ENCODE measurements at regions of chr5 and their contacts with region 1.

Region 1: DNA sequence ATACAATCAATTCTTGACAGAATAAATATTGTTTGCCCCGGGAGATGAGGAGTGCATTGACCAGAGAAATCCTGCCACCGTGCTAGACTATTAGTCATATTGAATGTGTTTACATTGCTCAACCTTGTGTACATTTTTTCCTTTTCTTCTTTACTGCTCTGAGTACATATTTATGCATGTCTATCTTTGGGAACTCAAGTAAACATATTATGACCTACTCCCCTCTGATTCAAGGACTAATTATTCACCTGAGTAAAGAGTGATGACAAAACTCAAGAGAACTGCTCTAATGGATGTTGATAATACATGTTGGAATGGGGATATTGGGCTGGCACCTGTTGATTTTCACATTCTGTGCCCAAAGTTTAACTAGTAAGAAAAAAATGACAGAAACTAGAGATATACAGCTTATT is 3.9 kb upstream of the SPINK1 start:
- DNase-seq: peak in 1 of 2 experiments; percentile 65
- H3K4me3 ChIP-seq: no peak overlapping the region
- H3K4me3 Mint-ChIP-seq: peak overlapping the region; percentile 10
- H3K27ac Mint-ChIP-seq: peak overlapping the region; percentile 48
- H3K4me1 ChIP-seq: peaks cover 81% of the 10 kb centered on the region
- H3K4me1 Mint-ChIP-seq: peaks cover 53% of the 10 kb centered on the region
- H3K27me3 ChIP-seq: no peaks in the 10 kb centered on the region
- H3K27me3 Mint-ChIP-seq: no peaks in the 10 kb centered on the region
- CTCF ChIP-seq: no peak

Region 2: GRCh38 chr5:147437161-147437596 is 398.2 kb before region 1 on chr5:
- CTCF ChIA-PET with region 1: no interaction called
- POLR2A ChIA-PET with region 1: no interaction called
- intact Hi-C with region 1: loop called (anchors 10 kb)
- DNase-seq: no peak
- H3K4me3 ChIP-seq: no peak overlapping the region
- H3K4me3 Mint-ChIP-seq: no peak overlapping the region
- H3K27ac Mint-ChIP-seq: no peak overlapping the region
- H3K4me1 ChIP-seq: peaks cover 35% of the 10 kb centered on the region
- H3K4me1 Mint-ChIP-seq: peaks cover 58% of the 10 kb centered on the region
- H3K27me3 ChIP-seq: no peaks in the 10 kb centered on the region
- H3K27me3 Mint-ChIP-seq: no peaks in the 10 kb centered on the region
- CTCF ChIP-seq: no peak

Region 3: DNA sequence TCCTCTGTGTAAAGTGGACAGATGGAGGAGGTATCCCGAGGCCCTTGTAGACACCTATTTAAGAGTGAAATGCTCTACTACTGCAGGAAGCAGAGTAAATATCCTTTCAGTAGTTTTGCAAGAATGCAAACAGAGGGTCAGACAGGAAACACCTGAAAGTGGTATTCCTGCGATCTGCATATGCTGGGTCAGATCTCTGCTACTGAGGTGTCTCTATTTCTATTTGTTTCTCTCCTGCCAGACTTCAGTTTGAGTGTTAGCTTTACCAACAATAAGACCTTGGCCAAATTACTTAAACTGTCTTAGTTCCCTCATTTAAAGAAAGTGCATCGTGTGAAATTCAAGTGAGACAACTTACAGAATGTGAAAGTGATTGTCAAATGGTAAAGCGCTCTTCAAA is 100.5 kb before region 1 on chr5:
- CTCF ChIA-PET with region 1: no interaction called
- POLR2A ChIA-PET with region 1: no interaction called
- intact Hi-C with region 1: loop called (anchors 5 kb)
- DNase-seq: no peak
- H3K4me3 ChIP-seq: no peak overlapping the region
- H3K4me3 Mint-ChIP-seq: no peak overlapping the region
- H3K27ac Mint-ChIP-seq: no peak overlapping the region
- H3K4me1 ChIP-seq: peaks cover 22% of the 10 kb centered on the region
- H3K4me1 Mint-ChIP-seq: peaks cover 22% of the 10 kb centered on the region
- H3K27me3 ChIP-seq: no peaks in the 10 kb centered on the region
- H3K27me3 Mint-ChIP-seq: no peaks in the 10 kb centered on the region
- CTCF ChIP-seq: no peak

Region 4: DNA sequence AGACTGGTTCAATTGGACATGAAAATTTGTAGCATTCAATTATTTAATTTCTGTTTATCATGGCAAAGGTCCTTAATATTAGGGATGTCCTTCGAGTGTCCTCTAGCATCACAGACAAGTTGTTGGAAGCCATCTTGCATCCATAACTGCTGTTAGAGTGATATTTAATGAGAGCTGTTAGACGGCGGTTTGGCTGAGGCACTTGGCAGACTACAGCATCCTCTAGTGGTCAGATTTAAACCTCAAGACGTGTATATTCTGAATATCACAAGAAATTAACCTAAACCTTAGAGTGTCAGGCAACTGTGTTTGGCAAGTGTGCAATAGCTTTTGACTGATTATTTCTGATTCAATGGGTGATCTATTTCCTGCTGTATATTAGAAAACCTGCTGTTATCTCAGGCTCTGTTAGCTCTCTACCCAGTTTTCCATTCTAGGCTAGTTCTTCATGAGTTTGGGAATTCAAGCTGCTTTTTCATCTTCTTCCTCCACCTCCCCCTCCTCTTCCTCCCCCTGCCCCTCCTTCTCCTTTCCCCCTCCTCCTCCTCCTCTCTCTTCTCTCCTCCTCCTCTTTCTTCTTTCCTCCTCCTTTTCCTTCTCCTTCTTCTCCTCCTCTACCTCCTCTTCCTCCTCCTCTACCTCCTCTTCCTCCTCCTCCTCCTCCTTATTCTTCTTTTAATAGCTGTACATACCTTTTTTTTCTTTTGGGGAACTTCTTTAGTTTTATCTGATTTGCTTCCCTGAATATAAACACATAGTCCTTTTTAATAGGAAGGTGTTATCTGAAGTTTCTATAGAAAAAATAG is 12.5 kb before region 1 on chr5:
- CTCF ChIA-PET with region 1: no interaction called
- POLR2A ChIA-PET with region 1: no interaction called
- intact Hi-C with region 1: loop called (anchors 1 kb)
- DNase-seq: peak in 1 of 2 experiments; percentile 44
- H3K4me3 ChIP-seq: no peak overlapping the region
- H3K4me3 Mint-ChIP-seq: no peak overlapping the region
- H3K27ac Mint-ChIP-seq: no peak overlapping the region
- H3K4me1 ChIP-seq: peaks cover 16% of the 10 kb centered on the region; the same call in 1 of the 2 replicates
- H3K4me1 Mint-ChIP-seq: peaks cover 18% of the 10 kb centered on the region
- H3K27me3 ChIP-seq: no peaks in the 10 kb centered on the region
- H3K27me3 Mint-ChIP-seq: no peaks in the 10 kb centered on the region
- CTCF ChIP-seq: peak; percentile 54 to 61

Region 5: DNA sequence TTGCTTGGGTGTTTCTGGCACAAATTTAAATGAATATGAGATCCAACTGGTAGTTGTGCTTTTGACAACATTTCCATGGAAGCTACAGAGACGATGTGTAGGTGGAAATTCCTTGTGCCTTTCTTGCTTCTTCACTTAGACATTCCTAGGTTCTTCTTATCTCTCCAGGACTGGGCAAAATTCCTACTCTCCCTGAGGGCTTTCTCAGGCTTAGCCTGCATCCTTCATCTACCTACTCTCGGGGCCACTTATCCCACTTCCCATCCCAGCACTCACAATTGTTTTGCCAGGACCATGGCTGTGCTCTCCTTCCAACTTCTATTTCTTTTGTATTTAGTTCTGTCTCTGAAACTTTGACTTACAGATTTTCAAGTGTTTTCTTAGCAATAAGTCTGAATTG is 13.8 kb after region 1 on chr5:
- CTCF ChIA-PET with region 1: no interaction called
- POLR2A ChIA-PET with region 1: no interaction called
- intact Hi-C with region 1: no loop called
- DNase-seq: no peak
- H3K4me3 ChIP-seq: no peak overlapping the region
- H3K4me3 Mint-ChIP-seq: no peak overlapping the region
- H3K27ac Mint-ChIP-seq: no peak overlapping the region
- H3K4me1 ChIP-seq: no peaks in the 10 kb centered on the region
- H3K4me1 Mint-ChIP-seq: peaks cover 7% of the 10 kb centered on the region
- H3K27me3 ChIP-seq: no peaks in the 10 kb centered on the region
- H3K27me3 Mint-ChIP-seq: no peaks in the 10 kb centered on the region
- CTCF ChIP-seq: no peak

Region 6: GRCh38 chr5:147863454-147864206 is 28.2 kb after region 1 on chr5:
- CTCF ChIA-PET with region 1: no interaction called
- POLR2A ChIA-PET with region 1: no interaction called
- intact Hi-C with region 1: no loop called
- DNase-seq: no peak
- H3K4me3 ChIP-seq: no peak overlapping the region
- H3K4me3 Mint-ChIP-seq: no peak overlapping the region
- H3K27ac Mint-ChIP-seq: no peak overlapping the region
- H3K4me1 ChIP-seq: no peaks in the 10 kb centered on the region; the same call in 1 of the 2 replicates
- H3K4me1 Mint-ChIP-seq: peaks cover 7% of the 10 kb centered on the region
- H3K27me3 ChIP-seq: no peaks in the 10 kb centered on the region
- H3K27me3 Mint-ChIP-seq: no peaks in the 10 kb centered on the region
- CTCF ChIP-seq: no peak

Region 7: DNA sequence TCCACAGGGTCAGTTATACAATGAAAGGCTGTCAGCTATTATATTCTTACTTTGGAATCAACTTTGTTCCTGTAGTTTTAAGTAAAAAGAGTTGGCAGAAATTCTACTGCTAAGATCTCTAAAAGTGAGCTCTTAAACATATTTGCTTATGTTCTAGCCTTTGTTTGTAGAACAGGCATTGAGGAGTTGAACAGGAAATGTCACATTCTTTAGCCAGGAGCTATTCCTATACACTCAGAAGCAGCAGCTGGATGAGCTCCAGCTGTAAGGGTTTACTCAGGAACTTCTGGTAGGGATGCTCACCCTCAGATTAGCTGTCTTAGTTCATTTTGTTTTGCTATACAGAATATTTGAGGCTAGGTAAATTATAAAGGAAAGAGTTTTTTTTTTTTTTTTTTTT is 310.5 kb after region 1 on chr5:
- CTCF ChIA-PET with region 1: no interaction called
- POLR2A ChIA-PET with region 1: interaction called, 3 read pairs
- intact Hi-C with region 1: loop called (anchors 2 kb)
- DNase-seq: peak; percentile 71 to 77
- H3K4me3 ChIP-seq: no peak overlapping the region
- H3K4me3 Mint-ChIP-seq: peak overlapping the region; percentile 57
- H3K27ac Mint-ChIP-seq: peak overlapping the region; percentile 90
- H3K4me1 ChIP-seq: peaks cover 53% of the 10 kb centered on the region
- H3K4me1 Mint-ChIP-seq: peaks cover 44% of the 10 kb centered on the region
- H3K27me3 ChIP-seq: no peaks in the 10 kb centered on the region
- H3K27me3 Mint-ChIP-seq: no peaks in the 10 kb centered on the region
- CTCF ChIP-seq: no peak

Measured in Caco-2 (cell line).